Natural killer cell (primary cell): ENCODE measurements at regions of chr20 and their contacts with region 1.

Region 1: GRCh38 chr20:20417876-20418676 is 50.2 kb downstream of the INSM1 start:
- DNase-seq: no peak
- ATAC-seq: no peak
- H3K4me3 ChIP-seq: no peak overlapping the region
- H3K4me3 Mint-ChIP-seq: no peak overlapping the region
- H3K27ac ChIP-seq: no peak overlapping the region
- H3K27ac Mint-ChIP-seq: no peak overlapping the region
- H3K4me1 ChIP-seq: no peaks in the 10 kb centered on the region
- H3K4me1 Mint-ChIP-seq: peaks cover 11% of the 10 kb centered on the region in 2 donors
- H3K27me3 ChIP-seq: no peaks in the 10 kb centered on the region
- H3K27me3 Mint-ChIP-seq: no peaks in the 10 kb centered on the region
- CTCF ChIP-seq: no peak

Region 2: DNA sequence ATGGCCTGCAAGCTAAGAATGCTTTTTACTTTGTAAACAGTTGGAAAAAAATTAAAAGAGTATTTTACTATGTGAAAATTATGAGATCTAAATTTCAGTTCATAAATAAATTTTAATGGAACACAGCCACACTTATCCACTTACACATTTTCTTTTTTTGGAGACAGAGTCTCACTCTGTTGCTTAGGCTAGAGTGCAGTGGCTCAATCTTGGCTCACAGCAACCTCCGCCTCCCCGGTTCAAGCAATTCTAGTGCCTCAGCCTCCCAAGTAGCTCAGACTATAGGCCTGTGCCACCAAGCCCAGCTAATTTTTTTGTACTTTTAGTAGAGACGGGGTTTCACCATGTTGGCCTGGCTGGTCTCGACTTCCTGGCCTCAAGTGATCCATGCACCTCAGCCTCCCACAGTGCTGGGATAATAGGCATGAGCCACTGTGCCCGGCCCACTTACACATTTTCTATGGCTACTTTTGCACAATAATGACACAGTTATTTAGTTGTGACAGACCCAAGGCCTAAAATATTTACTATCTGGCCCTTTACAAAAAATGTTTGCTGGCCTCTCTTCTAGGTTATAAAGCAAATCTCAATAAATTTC is 59.5 kb after region 1 on chr20:
- intact Hi-C with region 1: loop called (anchors 2 kb)
- DNase-seq: no peak
- ATAC-seq: no peak
- H3K4me3 ChIP-seq: no peak overlapping the region
- H3K4me3 Mint-ChIP-seq: no peak overlapping the region
- H3K27ac ChIP-seq: no peak overlapping the region
- H3K27ac Mint-ChIP-seq: no peak overlapping the region
- H3K4me1 ChIP-seq: no peaks in the 10 kb centered on the region
- H3K4me1 Mint-ChIP-seq: no peaks in the 10 kb centered on the region
- H3K27me3 ChIP-seq: no peaks in the 10 kb centered on the region
- H3K27me3 Mint-ChIP-seq: no peaks in the 10 kb centered on the region
- CTCF ChIP-seq: no peak